CD4-positive, alpha-beta memory T cell (primary cell): ENCODE measurements at regions of chr1 and their contacts with region 1.

Region 1: DNA sequence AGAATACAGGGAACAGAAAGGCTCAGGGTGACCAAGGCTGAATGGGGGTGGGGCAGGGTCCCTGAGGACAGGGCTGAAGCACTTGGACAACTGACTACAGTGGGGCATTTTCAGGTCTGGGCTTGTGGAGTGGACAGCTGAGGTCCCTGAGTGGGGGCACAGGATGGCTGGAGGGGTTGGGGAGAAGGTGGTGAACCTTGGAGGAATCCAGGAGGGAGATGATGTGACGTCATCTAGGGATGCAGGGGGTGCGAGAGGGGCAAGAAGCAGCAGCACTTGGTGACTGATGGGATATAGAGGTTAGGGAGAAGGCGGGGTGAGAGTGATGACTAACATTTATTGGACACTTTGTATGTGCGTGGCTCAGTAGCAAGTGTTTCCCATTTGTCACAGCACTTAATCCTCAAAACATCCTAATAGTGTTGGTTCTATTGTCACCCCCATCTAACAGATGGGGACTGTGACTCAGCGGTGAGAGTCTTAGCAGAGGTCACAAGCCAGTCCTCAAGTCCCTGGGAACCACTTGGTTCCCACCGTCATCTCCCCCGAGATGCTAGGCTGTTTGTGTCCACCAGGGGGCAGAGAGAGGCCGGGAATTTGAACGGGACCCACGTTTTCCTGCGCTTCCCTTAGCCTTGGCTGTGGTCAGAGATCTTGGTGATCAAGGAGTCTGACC is 27.9 kb upstream of the BMP8B start:
- DNase-seq: peak; percentile 25 to 64 (median 51)
- H3K4me3 ChIP-seq: peak overlapping the region in 1 of 2 donors; percentile 36
- H3K4me3 Mint-ChIP-seq: peak overlapping the region; percentile 53 to 91 (median 83)
- H3K27ac ChIP-seq: no peak overlapping the region
- H3K27ac Mint-ChIP-seq: peak overlapping the region in 4 of 7 donors; percentile 19 to 93 (median 64)
- H3K4me1 ChIP-seq: peaks cover 8% of the 10 kb centered on the region
- H3K4me1 Mint-ChIP-seq: peaks cover 2 to 13% (median 9%) of the 10 kb centered on the region in 4 donors
- H3K27me3 ChIP-seq: no peaks in the 10 kb centered on the region
- H3K27me3 Mint-ChIP-seq: peaks cover 9 to 16% of the 10 kb centered on the region in 2 donors

Region 2: DNA sequence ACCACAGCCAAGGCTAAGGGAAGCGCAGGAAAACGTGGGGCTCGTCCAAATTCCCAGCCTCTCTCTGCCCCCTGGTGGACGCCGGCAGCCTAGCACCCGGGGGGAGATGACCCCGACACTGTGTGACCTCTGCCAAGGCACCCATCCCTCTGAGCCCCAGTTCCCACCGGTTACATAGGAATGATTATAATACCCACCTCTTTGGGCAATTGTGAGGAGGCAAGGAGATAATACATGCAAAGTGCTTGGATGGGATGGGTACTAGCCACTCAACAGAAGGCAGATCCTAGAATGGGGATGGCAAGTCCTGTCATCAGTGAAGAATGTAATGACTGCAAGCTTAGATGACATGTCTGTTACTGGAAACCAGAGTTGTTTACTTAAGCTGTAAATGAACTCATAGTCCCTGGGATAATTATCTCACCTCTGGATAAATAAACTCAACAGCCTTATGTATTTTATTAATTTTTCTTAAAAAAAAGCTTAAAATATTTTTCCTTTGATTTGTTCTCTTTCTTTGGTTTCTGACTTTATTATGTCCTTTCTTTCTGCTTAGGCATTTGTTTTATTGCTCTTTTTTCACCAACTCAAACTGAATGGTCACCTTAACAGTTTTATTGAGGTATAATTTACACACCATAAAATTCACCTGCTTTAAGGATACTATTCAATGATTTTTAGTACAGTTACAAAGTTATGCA is 16.6 kb before region 1 on chr1:
- CTCF ChIA-PET with region 1: interaction called, 10 read pairs
- POLR2A ChIA-PET with region 1: no interaction called
- intact Hi-C with region 1: no loop called
- DNase-seq: peak; percentile 46 to 65 (median 60)
- H3K4me3 ChIP-seq: peak overlapping the region in 1 of 2 donors; percentile 26
- H3K4me3 Mint-ChIP-seq: peak overlapping the region; percentile 59 to 84 (median 78)
- H3K27ac ChIP-seq: peak overlapping the region; percentile 57
- H3K27ac Mint-ChIP-seq: peak overlapping the region; percentile 8 to 97 (median 95)
- H3K4me1 ChIP-seq: peaks cover 8% of the 10 kb centered on the region
- H3K4me1 Mint-ChIP-seq: peaks cover 5 to 14% (median 11%) of the 10 kb centered on the region in 4 donors
- H3K27me3 ChIP-seq: no peaks in the 10 kb centered on the region
- H3K27me3 Mint-ChIP-seq: no peaks in the 10 kb centered on the region

Region 3: DNA sequence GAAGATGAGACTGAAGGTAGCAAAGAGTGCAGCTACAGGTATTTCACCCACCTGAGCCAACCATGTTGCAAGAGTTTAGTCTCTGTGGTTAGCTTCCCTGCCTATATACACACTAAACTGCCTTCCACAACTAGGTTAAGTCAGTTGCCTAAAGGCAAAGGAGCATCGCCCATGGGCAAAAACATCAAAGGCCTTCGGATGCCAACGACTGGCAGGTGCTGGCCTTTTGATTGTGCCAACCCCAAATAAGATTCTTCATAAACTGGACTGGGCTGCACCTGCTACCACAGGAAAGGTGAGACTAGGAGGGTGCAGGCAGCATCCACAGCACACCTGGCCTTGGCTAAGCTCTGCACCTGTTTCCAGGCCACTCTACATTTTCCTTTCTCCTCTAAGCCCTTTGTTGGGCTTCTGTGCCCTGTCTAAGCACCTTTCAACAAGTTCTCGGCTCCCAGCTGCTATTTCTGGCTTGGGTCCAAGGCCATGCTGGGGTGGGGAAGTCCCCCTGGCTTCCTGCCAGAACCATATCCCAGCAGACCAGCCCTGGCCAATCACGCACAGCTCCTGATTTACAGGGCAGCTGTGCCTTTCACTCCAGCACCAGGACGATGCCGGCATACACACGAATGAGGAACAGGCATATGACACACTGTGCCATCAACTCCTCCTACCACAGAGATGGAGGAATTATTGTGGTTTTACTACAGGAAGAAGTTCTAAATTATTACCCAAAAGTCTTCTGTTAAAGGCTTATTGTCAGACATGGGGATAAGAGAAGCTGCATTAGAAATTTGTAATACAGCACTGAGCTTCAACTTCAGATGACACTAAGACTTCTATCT is 28.9 kb after region 1 on chr1:
- CTCF ChIA-PET with region 1: interaction called, 19 read pairs
- POLR2A ChIA-PET with region 1: interaction called, 11 read pairs
- intact Hi-C with region 1: loop called (anchors 1 kb)
- DNase-seq: peak; percentile 86 to 96 (median 90)
- H3K4me3 ChIP-seq: no peak overlapping the region
- H3K4me3 Mint-ChIP-seq: peak overlapping the region; percentile 55 to 88 (median 67)
- H3K27ac ChIP-seq: peak overlapping the region; percentile 68
- H3K27ac Mint-ChIP-seq: peak overlapping the region; percentile 92 to 97 (median 93)
- H3K4me1 ChIP-seq: peaks cover 56% of the 10 kb centered on the region
- H3K4me1 Mint-ChIP-seq: peaks cover 46 to 64% (median 52%) of the 10 kb centered on the region in 4 donors
- H3K27me3 ChIP-seq: no peaks in the 10 kb centered on the region
- H3K27me3 Mint-ChIP-seq: no peaks in the 10 kb centered on the region

Region 4: GRCh38 chr1:39901698-39902459 is 85.3 kb after region 1 on chr1 and contains the start of gene MYCL:
- CTCF ChIA-PET with region 1: interaction called, 135 read pairs
- POLR2A ChIA-PET with region 1: interaction called, 21 read pairs
- intact Hi-C with region 1: loop called (anchors 1 kb)
- DNase-seq: peak; percentile 59 to 68 (median 63)
- H3K4me3 ChIP-seq: peak within 1 kb of the TSS; percentile 23 to 58
- H3K4me3 Mint-ChIP-seq: peak within 1 kb of the TSS; percentile 72 to 84 (median 78)
- H3K27ac ChIP-seq: no peak within 1 kb of the TSS
- H3K27ac Mint-ChIP-seq: no peak within 1 kb of the TSS
- H3K4me1 ChIP-seq: peaks cover 9% of the 10 kb centered on the region
- H3K4me1 Mint-ChIP-seq: peaks cover 0 to 11% (median 4%) of the 10 kb centered on the region in 4 donors
- H3K27me3 ChIP-seq: peaks cover 9% of the 10 kb centered on the region
- H3K27me3 Mint-ChIP-seq: peaks cover 21 to 39% of the 10 kb centered on the region in 2 donors
- total RNA-seq, gene MYCL: 0.19 to 0.20 TPM

Region 5: GRCh38 chr1:40032240-40032891 is 215.8 kb after region 1 on chr1:
- CTCF ChIA-PET with region 1: interaction called, 12 read pairs
- POLR2A ChIA-PET with region 1: no interaction called
- intact Hi-C with region 1: loop called (anchors 2 kb)
- DNase-seq: peak; percentile 44 to 53 (median 51)
- H3K4me3 ChIP-seq: no peak overlapping the region
- H3K4me3 Mint-ChIP-seq: peak overlapping the region in 1 of 8 donors; percentile 32
- H3K27ac ChIP-seq: no peak overlapping the region
- H3K27ac Mint-ChIP-seq: peak overlapping the region in 6 of 7 donors; percentile 5 to 92 (median 60)
- H3K4me1 ChIP-seq: peaks cover 48% of the 10 kb centered on the region
- H3K4me1 Mint-ChIP-seq: peaks cover 25 to 58% (median 43%) of the 10 kb centered on the region in 4 donors
- H3K27me3 ChIP-seq: no peaks in the 10 kb centered on the region
- H3K27me3 Mint-ChIP-seq: no peaks in the 10 kb centered on the region